ENCODE measurements at regions of chr3 and their contacts with region 1.

Region 1: GRCh38 chr3:59857589-59858346 is 807.9 kb upstream of the CFAP20DC start:
- DNase-seq: peak; percentile 83
- H3K4me3 ChIP-seq: no peak overlapping the region
- H3K27ac ChIP-seq: no peak overlapping the region
- H3K4me1 ChIP-seq: peaks cover 3% of the 10 kb centered on the region
- H3K27me3 ChIP-seq: no peaks in the 10 kb centered on the region
- CTCF ChIP-seq: peak; percentile 93

Region 2: GRCh38 chr3:57927916-57928315 is 1929.9 kb before region 1 on chr3:
- intact Hi-C with region 1: no loop called
- DNase-seq: no peak
- H3K4me3 ChIP-seq: no peak overlapping the region
- H3K27ac ChIP-seq: no peak overlapping the region
- H3K4me1 ChIP-seq: peaks cover 39% of the 10 kb centered on the region
- H3K27me3 ChIP-seq: no peaks in the 10 kb centered on the region
- CTCF ChIP-seq: no peak

Region 3: GRCh38 chr3:59212128-59212779 is 645.5 kb before region 1 on chr3:
- intact Hi-C with region 1: loop called (anchors 10 kb)
- DNase-seq: no peak
- H3K4me3 ChIP-seq: no peak overlapping the region
- H3K27ac ChIP-seq: no peak overlapping the region
- H3K4me1 ChIP-seq: no peaks in the 10 kb centered on the region
- H3K27me3 ChIP-seq: peaks cover 15% of the 10 kb centered on the region
- CTCF ChIP-seq: peak; percentile 78

Region 4: DNA sequence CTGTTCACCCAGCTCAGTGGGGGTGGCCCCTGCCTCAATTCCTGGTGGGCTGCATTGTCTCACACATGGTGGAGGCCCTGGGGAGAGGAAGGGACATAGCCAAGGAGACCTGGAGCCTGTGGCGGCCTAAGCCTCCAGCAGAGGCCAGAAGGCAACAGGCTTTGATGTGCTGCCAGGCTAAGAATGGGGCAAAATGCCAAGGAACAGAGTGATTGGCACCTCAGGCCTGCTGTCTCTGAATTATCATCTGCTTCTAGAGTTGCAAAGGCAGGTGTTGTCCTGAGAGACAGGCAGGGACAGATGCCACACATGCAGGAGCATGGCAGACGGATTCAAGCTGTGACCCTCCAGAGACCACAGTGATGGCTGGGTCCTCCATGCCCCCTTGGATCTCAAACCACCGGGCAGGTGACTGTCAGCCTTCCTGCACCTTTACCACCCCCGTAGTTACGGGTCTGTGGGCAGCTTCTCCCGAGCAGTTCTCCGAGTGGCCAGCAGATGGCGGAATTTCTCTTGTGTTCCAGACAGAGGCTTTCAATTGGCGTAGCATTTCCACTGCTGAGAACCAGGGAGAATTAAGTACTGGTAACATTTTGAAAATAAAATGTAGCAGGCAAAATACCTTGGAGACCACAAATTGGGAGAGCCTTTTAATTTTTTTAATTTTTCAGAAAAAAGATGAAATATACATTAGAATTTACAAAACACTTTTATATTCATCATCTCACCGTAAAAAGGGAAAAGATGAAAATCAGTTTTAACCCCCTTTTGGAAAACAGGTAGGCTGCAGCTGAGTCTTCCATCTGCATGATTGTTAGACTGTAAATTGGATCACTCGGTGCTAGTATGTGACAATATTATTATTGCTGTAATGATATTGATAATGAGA is 282.4 kb before region 1 on chr3:
- intact Hi-C with region 1: loop called (anchors 5 kb)
- DNase-seq: peak; percentile 83
- H3K4me3 ChIP-seq: no peak overlapping the region
- H3K27ac ChIP-seq: no peak overlapping the region
- H3K4me1 ChIP-seq: peaks cover 26% of the 10 kb centered on the region
- H3K27me3 ChIP-seq: peaks cover 6% of the 10 kb centered on the region
- CTCF ChIP-seq: peak; percentile 98

Measured in left ventricle myocardium inferior (tissue), 1 donor.